ENCODE measurements at regions of chr22 and their contacts with region 1.

Region 1: DNA sequence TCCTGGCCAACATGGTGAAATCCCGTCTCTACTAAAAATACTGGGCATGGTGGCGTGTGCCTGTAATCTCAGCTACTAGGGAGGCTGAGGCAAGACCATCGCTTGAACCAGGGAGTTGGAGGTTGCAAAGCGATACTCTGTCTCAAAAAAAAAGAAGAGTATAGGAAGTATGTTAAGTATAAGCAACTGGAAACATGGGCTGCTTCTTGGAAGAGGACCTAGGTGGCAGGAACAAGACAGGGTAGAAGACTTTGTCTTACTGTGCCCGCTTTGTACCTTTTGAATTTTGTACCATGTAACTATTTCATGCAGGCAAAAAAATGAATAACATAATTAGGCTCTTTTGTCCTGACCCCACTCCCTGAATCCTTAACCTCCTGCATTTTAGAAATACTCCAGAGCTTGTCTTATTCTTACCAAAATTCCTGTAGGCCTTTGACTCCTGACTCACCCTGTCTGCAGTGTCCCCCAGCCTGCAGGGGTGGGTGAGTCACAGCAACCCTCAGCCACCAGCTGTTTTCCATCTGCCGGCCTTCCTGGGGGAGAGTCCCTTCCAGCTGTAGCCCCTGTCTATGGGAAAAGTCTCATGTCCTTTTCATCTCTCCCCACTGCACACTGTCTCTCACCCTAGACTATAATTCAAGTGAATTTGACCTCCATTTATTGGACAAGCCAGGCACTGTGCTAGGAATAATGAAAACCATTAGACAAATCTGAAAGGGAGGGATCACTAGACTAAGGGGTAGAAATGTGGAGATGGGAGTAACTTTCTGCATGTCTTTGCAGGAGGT is 41.8 kb downstream of the TXN2 start:
- DNase-seq: peak; percentile 65
- H3K4me3 ChIP-seq: no peak overlapping the region
- H3K27ac ChIP-seq: peak overlapping the region; percentile 49 to 72 (median 54)
- H3K4me1 ChIP-seq: peaks cover 12 to 74% (median 41%) of the 10 kb centered on the region in 4 donors
- H3K27me3 ChIP-seq: no peaks in the 10 kb centered on the region
- CTCF ChIP-seq: no peak
- EP300 ChIP-seq: no peak
- POLR2A ChIP-seq: no peak

Region 2: DNA sequence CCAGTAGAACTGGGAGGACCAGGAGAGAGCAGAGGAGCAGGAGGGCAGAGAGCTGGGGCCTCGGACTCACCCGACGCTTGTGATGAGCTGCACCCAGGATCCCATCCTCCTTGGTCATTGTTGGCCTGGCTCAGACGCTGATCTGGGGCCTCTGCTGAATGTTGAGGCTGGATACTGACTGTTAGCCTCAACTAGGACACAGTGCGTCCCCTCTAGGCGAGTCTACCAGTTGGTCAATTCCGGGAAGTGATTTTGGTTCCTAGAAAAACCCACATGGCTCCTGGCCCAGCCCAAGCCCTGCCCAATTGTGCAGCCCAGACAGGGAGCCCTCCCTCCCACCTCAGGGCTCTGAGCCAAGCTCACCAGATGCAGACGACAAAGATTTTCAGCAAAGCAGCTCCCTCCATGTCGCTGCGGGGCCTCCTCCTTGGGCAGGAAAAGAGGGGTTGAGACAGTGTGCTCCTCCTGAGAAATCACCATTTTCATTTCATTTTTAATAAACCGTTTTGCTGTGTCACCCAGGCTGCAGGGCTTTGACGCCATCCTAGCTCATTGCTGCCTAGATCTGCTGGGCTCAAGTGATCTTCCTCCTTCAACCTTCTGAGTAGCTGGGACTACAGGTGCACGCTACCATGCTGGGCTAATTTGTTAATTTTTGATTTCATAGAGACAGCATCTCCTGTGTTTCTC is 237.9 kb before region 1 on chr22 and contains the start of gene APOL4:
- in situ Hi-C with region 1: no loop called
- intact Hi-C with region 1: loop called (anchors 5 kb)
- DNase-seq: peak; percentile 66
- H3K4me3 ChIP-seq: no peak within 1 kb of the TSS
- H3K27ac ChIP-seq: peak within 1 kb of the TSS in 2 of 4 donors; percentile 34 to 46
- H3K4me1 ChIP-seq: peaks cover 0 to 26% (median 11%) of the 10 kb centered on the region in 4 donors
- H3K27me3 ChIP-seq: no peaks in the 10 kb centered on the region
- CTCF ChIP-seq: no peak
- EP300 ChIP-seq: no peak
- POLR2A ChIP-seq: peak; percentile 12
- total RNA-seq, gene APOL4: 0.16 to 9.0 (median 1.8) TPM in 3 of 4 donors, not detected in the other

Region 3: GRCh38 chr22:36587289-36588154 is 147.8 kb after region 1 on chr22:
- in situ Hi-C with region 1: no loop called
- intact Hi-C with region 1: no loop called
- DNase-seq: no peak
- H3K4me3 ChIP-seq: no peak overlapping the region
- H3K27ac ChIP-seq: no peak overlapping the region
- H3K4me1 ChIP-seq: no peaks in the 10 kb centered on the region
- H3K27me3 ChIP-seq: peaks cover 14% of the 10 kb centered on the region
- CTCF ChIP-seq: no peak
- EP300 ChIP-seq: no peak
- POLR2A ChIP-seq: no peak